Posterior vena cava (tissue), 2 donors: ENCODE measurements at regions of chr4 and their contacts with region 1.

Region 1: GRCh38 chr4:85968945-85969819 is 390.7 kb downstream of the MAPK10 start:
- DNase-seq: no peak

Region 2: DNA sequence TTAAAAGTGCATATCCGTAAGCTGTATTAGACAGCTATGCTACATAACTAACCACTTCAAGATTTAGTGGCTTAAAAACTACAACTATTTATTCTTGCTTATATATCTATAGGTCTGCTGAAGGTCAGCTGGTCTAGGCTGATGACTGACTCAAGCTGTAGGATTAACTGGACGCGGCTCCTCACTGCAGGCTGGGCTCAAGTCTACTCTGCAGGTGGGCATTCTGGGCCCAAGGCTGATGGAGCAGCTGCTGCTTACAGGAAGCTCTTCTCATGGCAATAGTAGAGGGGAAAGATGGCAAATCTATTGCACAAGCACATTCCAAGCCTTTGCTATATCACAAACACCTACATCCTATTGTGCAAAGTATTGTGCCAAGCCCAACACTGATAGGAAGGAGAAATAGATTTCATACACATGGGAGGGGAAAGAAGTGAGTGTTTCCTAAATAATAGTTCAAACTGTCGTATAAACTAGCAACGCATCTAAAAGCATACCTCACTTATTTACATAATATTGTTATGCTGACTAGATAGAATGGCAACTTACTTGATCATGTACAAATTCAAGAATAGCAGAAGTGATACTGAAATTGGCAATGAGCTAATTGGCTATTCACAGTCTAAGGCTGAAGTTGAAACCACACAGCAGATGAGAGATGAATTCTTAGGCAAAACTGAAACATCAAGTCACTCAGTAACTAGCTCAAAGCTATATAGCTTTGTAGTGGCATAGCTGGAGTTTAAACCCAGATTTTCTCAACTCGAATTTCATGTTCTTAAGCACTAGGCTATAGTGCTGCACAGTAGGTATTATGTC is 1733.8 kb before region 1 on chr4:
- intact Hi-C with region 1: no loop called
- DNase-seq: no peak

Region 3: DNA sequence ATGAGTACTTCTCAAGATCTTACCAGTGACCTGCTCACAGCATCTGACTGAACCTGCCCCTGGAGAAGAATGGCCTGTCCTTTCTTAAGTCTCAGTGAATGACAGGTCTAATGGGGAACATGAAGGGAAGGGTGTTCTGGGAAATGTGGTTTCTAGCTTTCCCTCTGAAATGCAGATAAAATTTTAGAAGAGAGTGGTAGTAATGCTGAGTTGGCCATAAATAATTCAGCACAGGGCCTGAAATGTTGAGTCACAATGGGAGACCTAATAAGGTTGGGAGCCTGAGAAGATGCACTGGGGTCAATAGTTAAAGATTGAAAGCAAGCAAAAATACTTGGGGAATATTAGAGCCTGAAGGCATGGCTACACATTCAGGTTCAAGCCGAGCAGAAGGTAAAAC is 709.1 kb before region 1 on chr4:
- intact Hi-C with region 1: no loop called
- DNase-seq: no peak

Region 4: GRCh38 chr4:85780664-85781063 is 188.5 kb before region 1 on chr4:
- intact Hi-C with region 1: loop called in 1 of 2 experiments (anchors 10 kb)
- DNase-seq: no peak

Region 5: GRCh38 chr4:85807247-85807950 is 161.8 kb before region 1 on chr4:
- intact Hi-C with region 1: loop called in 1 of 2 experiments (anchors 10 kb)
- DNase-seq: no peak